Activated CD4-positive, alpha-beta T cell treated with anti-CD3 and anti-CD28 coated beads, Interleukin-2, amount 10 ng/mL, durations not matched to agents 24 days and 14 days (primary cell): ENCODE measurements at regions of chr4 and their contacts with region 1.

Region 1: DNA sequence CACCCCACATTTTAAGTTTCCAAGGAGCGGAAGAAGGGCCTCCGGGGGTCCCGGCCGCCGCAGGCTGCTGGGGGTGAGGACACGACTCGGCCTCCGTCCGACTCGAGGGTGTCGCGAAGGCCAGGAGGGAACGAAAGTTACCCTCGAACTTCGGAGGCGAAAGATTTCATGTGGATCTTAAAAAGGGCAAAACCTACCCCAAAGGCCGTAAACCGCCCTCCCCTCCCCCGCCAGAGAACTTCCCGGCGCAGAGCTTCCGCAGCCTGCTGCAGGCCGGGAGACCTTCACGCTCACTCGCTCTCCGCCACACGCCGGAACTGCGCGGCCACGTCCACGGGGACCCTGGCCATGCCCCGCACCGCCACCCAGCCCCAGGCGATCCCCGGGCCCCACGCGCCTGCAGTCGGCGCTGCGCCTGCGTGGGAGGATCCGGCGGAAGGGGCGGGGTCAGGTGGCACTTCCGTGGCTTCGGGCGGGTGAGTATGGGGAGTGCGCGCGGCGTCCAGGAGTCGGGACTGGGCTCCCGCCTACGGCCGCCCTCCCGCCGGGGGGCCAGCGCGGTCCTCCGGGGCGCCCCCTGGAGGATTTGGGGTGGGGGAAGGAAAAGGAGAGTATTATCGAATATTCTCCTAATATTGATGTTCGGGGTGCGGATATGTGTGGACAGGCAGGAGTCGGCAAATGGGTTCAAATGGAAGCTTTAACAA is at the start of gene MMAA:
- DNase-seq: peak; percentile 99
- H3K4me3 Mint-ChIP-seq: peak within 1 kb of the TSS; percentile 98
- H3K27ac Mint-ChIP-seq: peak within 1 kb of the TSS; percentile 99
- H3K4me1 Mint-ChIP-seq: peaks cover 39% of the 10 kb centered on the region
- H3K27me3 Mint-ChIP-seq: peaks cover 2% of the 10 kb centered on the region
- total RNA-seq, gene MMAA: 18.9 and 19.5 TPM in 2 replicates

Region 2: DNA sequence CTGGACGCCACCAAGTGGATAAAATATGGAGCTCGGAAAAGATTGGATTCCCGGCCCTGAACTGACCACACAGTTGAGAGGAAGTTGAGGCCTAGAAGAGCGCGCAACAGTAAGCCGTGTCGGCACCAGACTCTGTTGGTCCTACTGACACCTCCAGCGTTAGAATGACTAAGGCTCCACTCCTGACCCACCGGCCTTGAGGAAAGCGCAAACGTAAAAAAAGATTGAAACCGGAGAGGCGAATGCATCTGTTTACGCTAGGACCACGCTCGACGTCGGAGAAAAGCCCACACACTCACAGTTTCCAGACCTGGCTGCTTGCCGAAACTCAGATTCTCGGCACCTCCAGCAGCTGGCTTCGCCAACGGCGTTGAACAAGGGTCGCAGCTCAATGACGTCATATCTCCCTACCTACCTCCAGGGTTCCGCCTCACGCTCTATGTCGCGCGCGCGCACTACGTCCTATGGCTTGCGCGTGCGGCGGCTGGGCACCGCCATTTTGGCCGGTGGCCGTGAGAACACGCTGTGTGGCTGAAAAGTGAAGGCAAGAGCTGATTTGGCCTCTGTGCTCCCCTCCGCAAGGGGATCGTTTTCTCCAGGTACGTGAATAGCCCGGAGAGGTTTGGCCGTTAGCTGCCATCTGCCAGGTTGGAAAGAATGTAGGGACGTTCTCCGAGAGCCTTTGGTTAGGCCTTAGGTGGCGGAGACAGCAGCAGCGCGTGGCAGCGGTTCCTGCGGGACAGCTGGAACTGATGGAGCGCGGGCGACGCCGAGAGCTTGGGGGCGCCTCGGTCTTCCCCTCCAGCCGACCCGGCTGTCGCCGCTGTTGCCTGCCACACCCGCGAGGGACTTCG is 521.0 kb before region 1 on chr4 and contains the starts of genes ABCE1 and ANAPC10:
- intact Hi-C with region 1: loop called (anchors 2 kb)
- DNase-seq: peak; percentile 99
- H3K4me3 Mint-ChIP-seq: peak within 1 kb of the TSS; percentile 96
- H3K27ac Mint-ChIP-seq: peak within 1 kb of the TSS; percentile 99
- H3K4me1 Mint-ChIP-seq: peaks cover 24% of the 10 kb centered on the region
- H3K27me3 Mint-ChIP-seq: no peaks in the 10 kb centered on the region
- total RNA-seq, gene ABCE1: 191 and 194 TPM in 2 replicates
- total RNA-seq, gene ANAPC10: 26.7 and 30.4 TPM in 2 replicates

Region 3: GRCh38 chr4:145216535-145216934 is 402.6 kb before region 1 on chr4:
- intact Hi-C with region 1: loop called (anchors 5 kb)
- DNase-seq: no peak
- H3K4me3 Mint-ChIP-seq: no peak overlapping the region
- H3K27ac Mint-ChIP-seq: no peak overlapping the region
- H3K4me1 Mint-ChIP-seq: no peaks in the 10 kb centered on the region
- H3K27me3 Mint-ChIP-seq: peaks cover 11% of the 10 kb centered on the region

Region 4: DNA sequence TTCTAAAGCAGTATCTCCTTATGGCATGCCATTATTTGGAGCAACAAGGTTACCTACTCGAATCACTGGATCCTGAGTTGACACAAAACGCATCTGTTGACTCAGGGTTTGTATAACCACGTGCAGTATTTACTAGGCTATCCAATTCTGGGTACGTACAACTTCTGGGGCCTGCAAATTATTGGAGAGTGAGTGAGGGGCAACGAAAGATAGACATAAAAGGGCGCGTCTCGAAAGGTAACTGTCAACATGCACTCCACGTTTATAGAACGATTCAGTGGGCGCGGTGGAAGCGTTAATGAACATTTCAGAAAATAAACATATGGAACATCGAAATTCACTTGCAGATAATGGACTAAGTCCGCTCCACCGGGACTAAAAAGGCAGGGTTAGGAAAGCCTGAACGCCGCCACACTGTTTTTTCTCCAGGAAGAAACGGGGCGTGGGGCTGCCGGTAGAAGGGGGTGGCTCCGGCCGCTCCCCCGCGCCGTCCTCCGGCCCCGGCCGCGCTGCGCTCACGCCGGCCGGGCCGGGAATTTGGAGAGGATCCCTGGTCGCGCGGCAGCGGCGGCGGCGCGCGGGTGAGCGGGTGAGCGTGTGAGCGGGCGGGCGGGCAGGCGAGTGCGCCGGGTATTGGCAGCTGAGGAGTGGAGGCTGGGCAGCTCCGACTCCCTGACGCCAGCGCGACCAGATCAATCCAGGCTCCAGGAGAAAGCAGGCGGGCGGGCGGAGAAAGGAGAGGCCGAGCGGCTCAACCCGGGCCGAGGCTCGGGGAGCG is 137.7 kb before region 1 on chr4 and contains the start of gene SMAD1:
- intact Hi-C with region 1: loop called (anchors 1 kb)
- DNase-seq: peak; percentile 75
- H3K4me3 Mint-ChIP-seq: no peak within 1 kb of the TSS
- H3K27ac Mint-ChIP-seq: peak within 1 kb of the TSS; percentile 79
- H3K4me1 Mint-ChIP-seq: peaks cover 10% of the 10 kb centered on the region
- H3K27me3 Mint-ChIP-seq: peaks cover 38% of the 10 kb centered on the region
- total RNA-seq, gene SMAD1: 3.9 and 4.3 TPM in 2 replicates

Region 5: DNA sequence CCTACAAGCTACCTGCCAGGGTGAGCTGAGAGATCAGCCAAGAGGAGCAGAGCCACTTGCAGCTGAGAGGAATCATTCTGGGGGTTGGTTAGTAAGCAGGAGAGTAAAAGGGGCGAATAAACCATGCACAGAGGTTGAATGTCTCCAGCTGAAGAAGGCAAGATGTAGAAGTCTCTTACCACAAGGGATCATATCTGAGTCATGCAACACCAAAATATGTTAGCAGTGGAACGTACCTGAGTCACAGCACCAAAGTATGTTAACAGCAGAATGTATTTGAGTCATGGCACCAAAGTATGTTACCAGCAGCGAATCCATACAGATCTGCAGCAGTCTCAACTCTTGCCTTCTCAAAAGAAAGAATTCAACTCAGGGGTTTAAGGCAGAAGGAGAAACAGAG is 90.8 kb after region 1 on chr4:
- intact Hi-C with region 1: no loop called
- DNase-seq: no peak
- H3K4me3 Mint-ChIP-seq: no peak overlapping the region
- H3K27ac Mint-ChIP-seq: peak overlapping the region; percentile 87
- H3K4me1 Mint-ChIP-seq: peaks cover 17% of the 10 kb centered on the region
- H3K27me3 Mint-ChIP-seq: no peaks in the 10 kb centered on the region

Region 6: GRCh38 chr4:145808021-145808650 is 189.1 kb after region 1 on chr4:
- intact Hi-C with region 1: loop called (anchors 1 kb)
- DNase-seq: peak; percentile 83
- H3K4me3 Mint-ChIP-seq: peak overlapping the region; percentile 60
- H3K27ac Mint-ChIP-seq: peak overlapping the region; percentile 95
- H3K4me1 Mint-ChIP-seq: peaks cover 44% of the 10 kb centered on the region
- H3K27me3 Mint-ChIP-seq: no peaks in the 10 kb centered on the region

Region 7: DNA sequence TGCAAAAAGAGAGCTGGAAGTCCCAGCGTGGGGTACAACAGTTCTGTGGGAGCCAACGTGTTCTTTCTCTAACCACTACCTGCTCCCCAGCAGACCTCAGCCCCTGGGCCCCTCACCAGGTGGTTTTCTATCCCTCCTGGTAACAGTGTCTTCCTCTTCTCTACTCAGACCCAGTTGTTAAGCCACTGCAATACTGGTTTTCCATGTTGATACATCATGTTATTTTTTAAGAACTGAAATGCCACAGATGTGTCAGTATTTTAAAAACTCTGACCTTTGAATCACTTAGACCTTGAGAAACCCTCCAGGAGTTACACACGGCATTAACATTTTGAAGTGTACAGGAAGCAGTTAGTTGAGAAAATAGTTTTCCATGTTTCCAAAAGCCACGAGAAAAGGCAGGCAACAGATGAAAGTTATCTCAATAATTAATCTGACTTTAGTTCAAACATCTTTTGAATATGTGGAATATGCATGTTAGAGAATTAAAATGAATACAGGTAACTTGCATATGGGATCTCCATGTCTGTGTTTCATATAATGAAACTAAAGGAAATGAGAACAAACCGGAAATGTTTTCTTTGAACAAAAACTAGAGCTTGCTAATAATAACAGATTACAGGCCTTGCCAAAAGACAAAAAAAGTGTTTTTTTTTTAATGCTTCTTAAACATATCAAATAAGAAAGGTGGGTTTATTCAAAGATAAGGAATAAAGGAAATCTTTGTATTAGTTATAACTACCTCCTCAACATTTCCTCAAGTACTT is 210.7 kb after region 1 on chr4:
- intact Hi-C with region 1: loop called (anchors 1 kb)
- DNase-seq: peak; percentile 70
- H3K4me3 Mint-ChIP-seq: peak overlapping the region; percentile 76
- H3K27ac Mint-ChIP-seq: peak overlapping the region; percentile 87
- H3K4me1 Mint-ChIP-seq: peaks cover 43% of the 10 kb centered on the region
- H3K27me3 Mint-ChIP-seq: no peaks in the 10 kb centered on the region

Region 8: GRCh38 chr4:146175541-146176453 is 556.7 kb after region 1 on chr4 and contains the start of gene LSM6:
- intact Hi-C with region 1: loop called (anchors 2 kb)
- DNase-seq: peak; percentile 95
- H3K4me3 Mint-ChIP-seq: peak within 1 kb of the TSS; percentile 84
- H3K27ac Mint-ChIP-seq: peak within 1 kb of the TSS; percentile 89
- H3K4me1 Mint-ChIP-seq: peaks cover 27% of the 10 kb centered on the region
- H3K27me3 Mint-ChIP-seq: no peaks in the 10 kb centered on the region
- total RNA-seq, gene LSM6: 60.4 and 60.7 TPM in 2 replicates